OCI-LY7 (cell line): ENCODE measurements at regions of chr1 and their contacts with region 1.

Region 1: GRCh38 chr1:62082456-62083363 is 111.9 kb upstream of the L1TD1 start:
- DNase-seq: peak; percentile 38
- H3K4me3 ChIP-seq: no peak overlapping the region
- H3K27ac ChIP-seq: no peak overlapping the region
- H3K4me1 ChIP-seq: no peaks in the 10 kb centered on the region
- CTCF ChIP-seq: peak; percentile 97

Region 2: DNA sequence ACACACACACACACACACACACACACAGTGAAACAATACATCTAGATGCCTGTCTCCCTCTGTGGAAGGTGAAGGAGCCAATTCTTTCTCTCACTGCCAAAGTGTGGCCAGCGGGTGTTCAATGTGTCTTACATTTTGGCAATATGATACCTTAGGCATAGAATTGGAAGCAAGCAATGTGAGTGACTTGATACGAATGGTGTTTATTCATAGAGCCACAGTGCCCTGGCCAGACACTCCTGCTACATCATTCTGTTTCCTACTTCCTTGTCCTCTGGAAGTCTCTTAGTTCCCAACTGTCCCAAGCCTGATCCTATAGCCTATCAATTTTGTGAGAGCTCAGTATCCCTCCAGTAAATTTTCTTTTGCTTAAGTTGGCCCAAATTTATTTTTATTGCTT is 58.0 kb before region 1 on chr1:
- CTCF ChIA-PET with region 1: no interaction called
- POLR2A ChIA-PET with region 1: no interaction called
- intact Hi-C with region 1: no loop called
- DNase-seq: no peak
- H3K4me3 ChIP-seq: no peak overlapping the region
- H3K27ac ChIP-seq: no peak overlapping the region
- H3K4me1 ChIP-seq: no peaks in the 10 kb centered on the region
- CTCF ChIP-seq: no peak

Region 3: DNA sequence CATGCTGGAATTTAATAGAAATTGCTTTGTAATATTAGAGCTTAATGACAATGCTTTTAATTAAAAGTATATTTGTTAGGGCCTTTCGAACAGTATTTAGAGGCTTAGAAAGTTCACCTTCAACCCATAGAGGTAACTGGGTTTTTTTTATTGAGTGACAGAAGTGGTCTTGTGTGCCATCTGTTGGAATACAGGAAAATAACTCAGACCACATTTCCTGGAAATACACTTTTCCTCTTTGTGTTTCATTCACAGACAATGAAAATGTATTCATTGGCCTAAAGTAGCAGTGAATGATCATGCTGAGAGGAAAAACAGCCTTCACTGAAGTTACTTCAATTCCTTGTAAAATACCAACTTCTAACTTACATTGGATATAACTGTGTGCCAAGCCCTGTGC is 28.4 kb after region 1 on chr1:
- CTCF ChIA-PET with region 1: no interaction called
- POLR2A ChIA-PET with region 1: no interaction called
- intact Hi-C with region 1: no loop called
- DNase-seq: no peak
- H3K4me3 ChIP-seq: no peak overlapping the region
- H3K27ac ChIP-seq: no peak overlapping the region
- H3K4me1 ChIP-seq: no peaks in the 10 kb centered on the region
- CTCF ChIP-seq: peak; percentile 30; the same call in 1 of the 2 replicates

Region 4: GRCh38 chr1:62131093-62131725 is 48.5 kb after region 1 on chr1:
- CTCF ChIA-PET with region 1: no interaction called
- POLR2A ChIA-PET with region 1: no interaction called
- intact Hi-C with region 1: loop called (anchors 1 kb)
- DNase-seq: peak; percentile 59
- H3K4me3 ChIP-seq: no peak overlapping the region
- H3K27ac ChIP-seq: no peak overlapping the region
- H3K4me1 ChIP-seq: no peaks in the 10 kb centered on the region
- CTCF ChIP-seq: peak; percentile 87